ENCODE measurements at regions of chr2 and their contacts with region 1.

Region 1: DNA sequence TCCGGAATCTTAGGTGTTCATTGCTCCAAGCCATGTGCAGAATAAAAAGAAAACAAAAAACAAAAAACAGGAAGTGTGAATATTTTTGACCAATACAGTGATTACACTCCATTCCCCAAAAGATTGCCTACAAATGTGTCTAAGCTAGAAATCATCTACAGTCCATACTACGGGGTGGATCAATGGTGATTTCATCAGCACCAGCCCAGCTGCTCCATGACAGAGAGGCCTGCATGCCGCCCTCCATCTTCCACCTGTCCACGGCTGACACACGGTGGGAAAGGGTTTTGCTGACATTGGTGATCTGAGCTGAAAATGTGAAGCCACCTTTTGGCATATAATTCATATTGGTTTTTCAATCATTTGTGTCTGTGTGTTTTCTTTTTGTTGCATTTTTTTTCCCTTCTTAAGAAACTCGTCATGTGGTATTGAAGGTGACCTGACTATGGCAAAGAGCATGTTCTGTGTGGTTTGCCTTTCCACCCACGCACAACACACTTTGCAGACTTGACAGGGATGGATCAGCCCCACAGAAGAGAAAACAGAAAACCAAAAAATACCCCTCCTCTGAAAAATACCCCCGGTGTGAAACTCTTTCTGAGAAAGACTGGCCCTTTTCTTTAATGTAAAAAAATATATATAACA is 533.1 kb downstream of the RNF144A start:
- DNase-seq: peak; percentile 59
- H3K4me3 Mint-ChIP-seq: peak overlapping the region; percentile 26
- H3K27ac Mint-ChIP-seq: peak overlapping the region; percentile 99
- H3K4me1 Mint-ChIP-seq: peaks cover 85% of the 10 kb centered on the region
- H3K27me3 Mint-ChIP-seq: no peaks in the 10 kb centered on the region

Region 2: GRCh38 chr2:7467782-7468447 is 17.6 kb after region 1 on chr2:
- intact Hi-C with region 1: loop called (anchors 1 kb)
- DNase-seq: peak; percentile 57
- H3K4me3 Mint-ChIP-seq: peak overlapping the region; percentile 15
- H3K27ac Mint-ChIP-seq: peak overlapping the region; percentile 96
- H3K4me1 Mint-ChIP-seq: peaks cover 58% of the 10 kb centered on the region
- H3K27me3 Mint-ChIP-seq: no peaks in the 10 kb centered on the region

Region 3: GRCh38 chr2:7523481-7524120 is 73.3 kb after region 1 on chr2:
- intact Hi-C with region 1: loop called (anchors 1 kb)
- DNase-seq: no peak
- H3K4me3 Mint-ChIP-seq: peak overlapping the region; percentile 46
- H3K27ac Mint-ChIP-seq: peak overlapping the region; percentile 88
- H3K4me1 Mint-ChIP-seq: peaks cover 69% of the 10 kb centered on the region
- H3K27me3 Mint-ChIP-seq: no peaks in the 10 kb centered on the region

Region 4: GRCh38 chr2:7588295-7588694 is 138.0 kb after region 1 on chr2:
- intact Hi-C with region 1: loop called (anchors 5 kb)
- DNase-seq: no peak
- H3K4me3 Mint-ChIP-seq: no peak overlapping the region
- H3K27ac Mint-ChIP-seq: peak overlapping the region; percentile 66
- H3K4me1 Mint-ChIP-seq: peaks cover 42% of the 10 kb centered on the region
- H3K27me3 Mint-ChIP-seq: no peaks in the 10 kb centered on the region

Region 5: GRCh38 chr2:7692657-7693161 is 242.4 kb after region 1 on chr2:
- intact Hi-C with region 1: loop called (anchors 1 kb)
- DNase-seq: no peak
- H3K4me3 Mint-ChIP-seq: peak overlapping the region; percentile 3
- H3K27ac Mint-ChIP-seq: peak overlapping the region; percentile 85
- H3K4me1 Mint-ChIP-seq: peaks cover 40% of the 10 kb centered on the region
- H3K27me3 Mint-ChIP-seq: no peaks in the 10 kb centered on the region

Measured in activated T-helper 2 cell treated with anti-CD3 and anti-CD28 coated beads, Interferon-gamma antibody, Interleukin-2, Interleukin-4, amounts not matched to agents 10 μg/mL and 5 μg/mL and 100 μg/mL, durations not matched to agents 14 hours and 24 hours and 36 hours (primary cell).